ENCODE measurements at regions of chr21 and their contacts with region 1.

Region 1: DNA sequence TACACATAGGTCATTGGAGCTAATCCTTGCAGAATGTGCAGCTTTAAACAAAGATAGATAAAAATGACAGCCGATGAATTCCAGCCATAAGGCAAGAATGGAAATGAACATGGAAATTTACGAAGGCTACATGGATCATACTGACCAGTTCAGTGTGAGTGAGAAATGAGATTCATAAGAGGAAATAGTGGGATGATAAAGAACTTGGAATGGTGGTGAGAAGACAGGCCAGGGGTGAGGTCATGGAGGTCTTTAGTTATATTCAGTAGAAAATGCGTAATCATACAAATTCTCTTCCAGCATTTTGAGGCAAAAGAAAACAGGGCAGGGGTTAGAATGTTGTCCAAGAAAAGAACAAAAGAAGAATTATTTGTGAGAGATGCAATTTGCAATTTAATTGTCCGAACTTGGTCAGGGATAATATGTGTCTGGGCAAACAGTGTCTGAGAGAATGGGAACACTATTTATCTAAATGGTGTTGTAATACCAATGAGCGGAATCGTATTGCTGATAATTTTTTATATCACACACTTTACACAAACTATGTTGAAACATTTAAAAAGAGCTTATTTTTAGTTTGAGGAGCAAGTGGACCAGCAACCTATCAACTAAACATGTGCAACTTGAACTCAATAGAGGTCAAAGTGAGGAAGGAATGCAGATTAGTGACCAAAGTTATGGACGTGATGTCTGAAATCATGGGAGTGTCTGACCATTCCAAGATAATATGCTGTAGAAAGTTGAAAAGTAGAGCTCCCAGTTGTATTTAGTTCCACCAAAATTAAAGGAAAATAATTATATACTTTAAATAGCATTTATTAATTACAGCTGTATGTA is 739.0 kb upstream of the NCAM2 start:
- DNase-seq: peak; percentile 24
- ATAC-seq: peak; percentile 55 to 93

Region 2: GRCh38 chr21:19853709-19854575 is 405.3 kb before region 1 on chr21:
- intact Hi-C with region 1: no loop called
- DNase-seq: no peak
- ATAC-seq: no peak

Region 3: GRCh38 chr21:20306836-20307235 is 47.6 kb after region 1 on chr21:
- intact Hi-C with region 1: no loop called
- DNase-seq: no peak
- ATAC-seq: no peak

Region 4: GRCh38 chr21:20661745-20662422 is 402.6 kb after region 1 on chr21:
- intact Hi-C with region 1: loop called in 1 of 2 experiments (anchors 10 kb)
- DNase-seq: no peak
- ATAC-seq: no peak